PC-3 (cell line): ENCODE measurements at regions of chr2 and their contacts with region 1.

Region 1: DNA sequence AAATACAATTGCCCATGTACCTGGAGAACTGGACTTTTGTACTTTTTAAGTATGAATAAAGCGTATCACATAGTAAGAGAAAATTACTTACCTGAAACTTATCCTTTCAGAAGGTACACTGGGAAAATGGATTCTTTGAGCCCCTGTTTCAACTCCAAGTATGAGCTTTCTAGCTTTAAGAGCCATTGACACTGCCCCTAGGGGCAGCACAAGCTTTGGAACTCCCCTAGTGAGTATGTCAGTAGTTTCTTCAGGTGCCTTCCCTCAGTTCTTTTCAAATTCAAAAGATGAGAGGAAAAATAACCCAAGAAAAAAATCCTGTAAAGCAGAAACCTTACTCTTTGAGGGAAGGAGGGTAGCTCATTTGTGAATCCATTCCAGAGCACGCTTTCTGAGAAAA is 124.1 kb downstream of the MEMO1 start:
- DNase-seq: peak; percentile 50
- ATAC-seq: peak; percentile 61
- H3K4me3 ChIP-seq: no peak overlapping the region
- H3K27ac ChIP-seq: no peak overlapping the region
- H3K4me1 ChIP-seq: no peaks in the 10 kb centered on the region
- H3K27me3 ChIP-seq: no peaks in the 10 kb centered on the region
- CTCF ChIP-seq: peak; percentile 68

Region 2: DNA sequence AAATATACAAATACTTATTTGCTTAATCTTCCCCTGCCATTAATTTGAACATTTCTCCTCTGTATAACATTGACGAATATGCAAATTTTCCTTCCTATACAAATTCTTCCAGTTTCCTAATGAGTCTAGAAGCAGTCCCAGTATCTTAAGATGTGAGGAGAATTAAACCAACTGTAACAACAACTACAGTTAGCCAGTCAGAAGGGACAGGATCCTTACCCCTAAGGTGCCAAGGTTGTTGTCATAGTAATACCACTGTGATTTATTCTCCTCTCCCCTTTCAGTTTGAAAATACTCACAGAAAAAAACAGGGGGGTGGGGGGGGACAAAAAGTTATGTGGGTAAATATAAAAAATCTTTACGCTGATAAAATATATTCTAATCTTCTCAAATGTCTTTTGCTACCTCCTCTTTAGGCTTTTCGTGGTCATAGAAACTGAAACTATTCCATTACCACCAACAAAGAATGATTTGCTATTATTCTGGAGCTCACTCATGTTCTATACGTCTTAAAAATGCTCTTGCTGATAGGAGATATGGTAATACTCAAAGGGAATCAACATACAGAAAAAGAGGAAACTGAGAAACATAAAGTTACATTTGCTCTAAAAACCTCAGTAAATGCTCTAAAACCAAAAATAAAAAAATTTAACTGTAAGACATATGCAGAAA is 16.5 kb after region 1 on chr2:
- CTCF ChIA-PET with region 1: no interaction called
- POLR2A ChIA-PET with region 1: interaction called, 10 read pairs
- intact Hi-C with region 1: no loop called
- DNase-seq: no peak
- ATAC-seq: no peak
- H3K4me3 ChIP-seq: no peak overlapping the region
- H3K27ac ChIP-seq: no peak overlapping the region
- H3K4me1 ChIP-seq: no peaks in the 10 kb centered on the region
- H3K27me3 ChIP-seq: no peaks in the 10 kb centered on the region
- CTCF ChIP-seq: no peak

Region 3: DNA sequence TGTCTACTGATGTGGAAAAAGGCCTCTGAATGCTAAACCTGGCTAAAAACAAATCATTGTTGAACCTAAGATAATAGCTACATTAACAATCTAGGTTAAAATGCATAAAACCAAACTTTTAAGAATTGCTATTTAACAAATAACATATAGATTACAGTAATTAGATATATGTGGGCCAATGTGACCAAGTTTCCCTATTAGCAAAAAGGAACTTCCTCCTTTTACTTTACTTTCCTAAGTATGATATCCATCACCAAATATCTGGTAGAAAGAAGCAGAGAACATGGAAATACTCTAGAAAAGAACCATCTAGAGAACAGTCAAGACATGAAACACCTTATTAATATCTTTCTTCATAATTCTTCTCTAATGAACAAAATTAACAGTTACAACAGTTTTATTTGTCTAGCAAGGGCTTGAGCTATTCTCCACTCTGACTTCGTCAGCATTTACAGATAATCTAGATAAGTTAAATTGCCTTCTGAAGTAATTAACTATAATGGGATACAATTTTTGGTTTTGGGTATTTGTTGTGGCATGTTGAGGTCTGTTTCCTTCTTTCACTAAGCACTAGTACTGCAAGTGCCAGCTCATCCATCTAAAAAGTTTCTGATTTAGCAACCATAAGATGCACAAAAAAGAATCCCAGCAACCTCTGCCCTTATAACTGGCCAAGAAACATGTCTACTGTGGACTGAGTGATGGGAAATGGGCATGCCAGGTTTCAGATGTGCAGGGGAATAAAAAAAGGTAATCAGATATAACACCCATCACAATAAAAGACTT is 70.8 kb after region 1 on chr2:
- CTCF ChIA-PET with region 1: no interaction called
- POLR2A ChIA-PET with region 1: no interaction called
- intact Hi-C with region 1: no loop called
- DNase-seq: no peak
- ATAC-seq: no peak
- H3K4me3 ChIP-seq: no peak overlapping the region
- H3K27ac ChIP-seq: no peak overlapping the region
- H3K4me1 ChIP-seq: peaks cover 8% of the 10 kb centered on the region; the same call in 1 of the 2 replicates
- H3K27me3 ChIP-seq: no peaks in the 10 kb centered on the region
- CTCF ChIP-seq: no peak

Region 4: DNA sequence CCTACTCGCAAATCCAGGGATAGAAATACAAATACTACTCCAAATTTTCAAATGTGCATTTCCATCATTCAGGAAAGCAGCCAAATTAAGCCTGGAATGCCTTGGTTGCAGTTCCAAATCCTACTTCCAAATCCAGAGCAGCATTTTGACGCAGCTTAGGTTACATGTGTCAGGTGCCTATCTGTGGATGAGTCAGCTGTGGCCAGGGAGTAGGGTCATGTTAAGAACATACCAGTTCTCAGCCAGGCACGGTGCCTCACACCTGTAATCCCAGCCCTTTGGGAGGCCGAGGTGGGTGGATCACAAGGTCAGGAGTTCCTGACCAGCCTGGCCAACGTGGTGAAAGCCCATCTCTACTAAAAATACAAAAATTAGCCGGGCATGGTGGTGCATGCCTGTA is 296.0 kb after region 1 on chr2:
- CTCF ChIA-PET with region 1: no interaction called
- POLR2A ChIA-PET with region 1: no interaction called
- intact Hi-C with region 1: no loop called
- DNase-seq: no peak
- ATAC-seq: no peak
- H3K4me3 ChIP-seq: no peak overlapping the region
- H3K27ac ChIP-seq: no peak overlapping the region
- H3K4me1 ChIP-seq: no peaks in the 10 kb centered on the region
- H3K27me3 ChIP-seq: no peaks in the 10 kb centered on the region
- CTCF ChIP-seq: no peak

Region 5: DNA sequence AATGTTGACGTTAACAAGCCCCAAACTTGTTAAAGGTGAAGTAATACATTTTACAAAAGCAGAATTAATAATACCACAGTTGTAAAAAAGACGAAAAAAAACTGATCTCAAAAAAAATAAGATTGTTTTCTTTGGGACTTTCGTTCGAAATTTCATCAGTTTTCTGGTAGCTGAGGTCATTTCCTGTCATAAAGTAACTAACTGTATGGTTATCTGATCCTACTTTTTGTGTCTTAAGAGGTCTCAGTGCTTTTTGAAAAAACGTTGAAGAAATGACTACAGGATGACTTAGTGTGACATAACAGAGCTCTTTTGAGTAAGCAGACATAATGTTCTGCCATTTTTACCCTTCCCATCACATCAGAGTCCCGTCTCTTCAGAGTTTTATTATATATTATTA is 549.5 kb after region 1 on chr2:
- CTCF ChIA-PET with region 1: no interaction called
- POLR2A ChIA-PET with region 1: no interaction called
- intact Hi-C with region 1: no loop called
- DNase-seq: no peak
- ATAC-seq: no peak
- H3K4me3 ChIP-seq: no peak overlapping the region
- H3K27ac ChIP-seq: no peak overlapping the region
- H3K4me1 ChIP-seq: no peaks in the 10 kb centered on the region
- H3K27me3 ChIP-seq: no peaks in the 10 kb centered on the region
- CTCF ChIP-seq: no peak